Cardiac septum (tissue), 1 donor: ENCODE measurements at regions of chr1 and their contacts with region 1.

Region 1: DNA sequence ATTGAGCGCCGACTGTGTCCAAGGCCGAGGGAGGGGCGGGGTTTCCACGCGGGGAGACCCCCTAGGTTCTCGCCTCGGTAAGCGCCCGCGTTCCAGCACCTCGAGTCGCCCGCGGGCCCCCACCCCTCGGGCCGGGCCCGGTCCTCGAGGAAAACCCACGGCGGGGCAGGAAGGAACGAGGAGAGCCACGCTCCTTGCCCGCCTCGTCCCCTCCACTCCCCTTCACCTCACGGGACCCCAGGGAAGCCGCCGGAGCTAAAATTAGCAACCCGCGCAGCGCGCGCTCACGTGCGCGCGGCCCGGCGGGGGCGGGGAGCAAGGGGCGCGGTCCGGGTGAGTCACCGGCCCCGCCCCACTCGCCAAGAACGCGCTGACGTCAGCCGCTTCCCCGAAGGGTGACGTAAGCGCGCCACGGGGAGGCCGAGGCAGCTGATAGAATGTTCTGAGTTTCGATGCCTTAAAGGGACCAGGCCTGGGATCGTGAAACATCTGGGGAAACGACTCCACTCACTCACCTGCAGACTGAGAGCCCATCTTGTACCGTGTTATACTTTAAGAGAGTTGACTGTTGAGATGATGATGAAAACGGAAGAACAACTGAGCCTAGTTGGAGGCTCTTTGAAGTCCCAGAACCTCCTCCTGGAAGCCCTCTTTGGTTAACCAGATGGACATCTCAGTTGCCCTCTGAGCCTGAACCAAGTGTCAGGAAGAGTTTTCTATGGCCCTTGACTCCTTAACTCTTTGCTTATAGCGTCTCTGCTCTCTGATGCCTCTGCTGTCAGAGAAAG is 49.7 kb upstream of the ATF3 start:
- DNase-seq: peak; percentile 96

Region 2: DNA sequence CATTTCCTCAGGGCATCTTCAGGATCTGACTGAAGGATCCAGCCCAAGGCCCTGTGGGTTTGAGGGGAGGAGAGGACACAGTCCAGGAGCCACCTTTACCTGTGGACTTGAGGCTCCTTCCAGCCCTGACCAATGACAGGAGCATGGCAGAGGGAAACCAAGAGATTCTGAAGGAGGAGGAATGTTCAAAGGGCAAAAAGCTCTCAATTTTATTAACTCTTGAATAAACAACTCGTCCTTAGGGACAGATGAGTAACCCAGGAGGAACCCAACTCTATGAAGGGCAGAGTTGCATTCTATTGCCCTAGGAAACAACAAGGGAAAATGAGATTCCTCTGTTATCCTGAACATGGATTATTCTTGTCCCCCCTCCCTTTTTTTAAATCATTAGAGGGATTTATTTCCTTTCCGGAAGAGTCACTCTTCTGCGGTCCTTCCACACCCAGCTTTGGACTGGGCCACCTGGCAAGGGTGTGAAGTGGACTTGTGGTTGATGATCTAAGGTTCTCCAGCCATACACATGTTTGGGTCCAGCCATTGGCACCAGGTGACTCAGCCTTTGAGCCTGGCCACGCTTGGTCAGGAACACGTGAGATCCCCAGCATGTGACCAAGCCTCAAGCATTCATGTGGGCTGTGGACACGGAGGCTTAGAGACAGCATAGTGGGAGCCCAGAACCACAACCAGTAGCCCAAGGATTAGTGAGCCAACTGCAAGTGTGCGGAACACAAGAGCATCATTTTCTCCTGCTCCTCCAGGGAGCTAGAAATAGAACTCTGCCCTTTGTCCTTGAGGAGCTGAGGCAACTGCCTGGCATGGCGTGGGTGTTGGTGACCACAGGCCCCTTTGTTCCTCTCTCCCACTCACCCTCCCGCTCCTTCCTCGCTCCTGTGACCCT is 76.3 kb before region 1 on chr1:
- intact Hi-C with region 1: loop called (anchors 5 kb)
- DNase-seq: no peak

Region 3: GRCh38 chr1:212514056-212514614 is 44.8 kb before region 1 on chr1:
- intact Hi-C with region 1: loop called (anchors 2 kb)
- DNase-seq: peak; percentile 78

Region 4: DNA sequence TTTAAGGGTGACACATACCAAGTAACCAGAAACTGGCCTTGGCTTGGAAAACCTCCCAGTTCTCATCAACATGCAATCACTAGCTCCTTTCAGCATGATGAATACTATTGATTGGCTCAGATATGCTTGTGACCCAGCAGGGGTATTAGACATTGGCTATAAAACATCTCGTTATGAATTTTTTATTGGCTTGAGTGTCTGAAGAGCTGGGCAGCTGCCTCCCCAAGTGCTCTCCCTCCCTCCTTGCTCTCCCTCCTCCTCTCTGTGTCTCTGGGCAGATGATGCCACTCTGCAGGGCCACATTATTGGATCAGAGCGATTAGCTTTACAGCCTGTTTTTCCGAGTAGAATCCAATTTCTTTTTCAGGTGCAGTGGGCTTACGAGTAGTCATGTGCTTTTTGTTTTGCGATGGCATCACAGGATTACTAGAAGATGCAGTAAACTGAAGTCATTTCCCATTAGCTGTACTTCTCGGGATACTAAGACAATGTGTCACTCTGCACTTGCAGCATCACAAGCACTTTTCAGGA is 29.6 kb before region 1 on chr1:
- intact Hi-C with region 1: loop called (anchors 2 kb)
- DNase-seq: no peak

Region 5: GRCh38 chr1:212578041-212578440 is 19.2 kb after region 1 on chr1:
- intact Hi-C with region 1: no loop called
- DNase-seq: no peak